Activated T-helper 1 cell treated with anti-CD3 and anti-CD28 coated beads, Interleukin-12 subunit alpha, Interleukin-12 subunit beta, Interleukin-2, Interleukin-4 antibody, amounts not matched to agents 30 ng/mL and 10 ng/mL and 1 ng/mL, durations not matched to agents 14 hours and 24 hours and 36 hours (primary cell): ENCODE measurements at regions of chr4 and their contacts with region 1.

Region 1: DNA sequence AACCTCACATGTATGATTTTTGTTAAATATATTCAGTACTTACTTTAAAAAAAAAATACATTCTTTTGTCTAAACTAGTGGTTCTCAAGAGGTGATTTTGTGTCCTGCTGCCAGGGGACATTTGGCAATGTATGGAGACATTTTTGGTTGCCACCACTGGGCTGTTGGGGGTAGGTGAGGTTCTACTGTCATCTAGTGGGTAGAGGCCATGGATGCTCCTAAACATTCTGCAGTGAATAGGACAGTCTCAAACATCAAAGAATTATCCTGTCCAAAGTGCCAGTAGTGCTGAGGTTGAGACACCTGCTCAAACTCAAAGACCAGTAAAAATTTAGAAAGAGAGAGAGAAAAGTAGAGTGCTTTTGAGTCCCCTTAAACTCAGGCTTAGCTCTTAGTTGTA is 32.9 kb upstream of the PGM2 start:
- DNase-seq: no peak
- H3K4me3 Mint-ChIP-seq: no peak overlapping the region
- H3K27ac Mint-ChIP-seq: no peak overlapping the region
- H3K4me1 Mint-ChIP-seq: no peaks in the 10 kb centered on the region
- H3K27me3 Mint-ChIP-seq: peaks cover 16% of the 10 kb centered on the region

Region 2: GRCh38 chr4:37452952-37453280 is 340.6 kb before region 1 on chr4:
- intact Hi-C with region 1: loop called (anchors 1 kb)
- DNase-seq: peak; percentile 19
- H3K4me3 Mint-ChIP-seq: peak overlapping the region; percentile 72
- H3K27ac Mint-ChIP-seq: no peak overlapping the region
- H3K4me1 Mint-ChIP-seq: peaks cover 15% of the 10 kb centered on the region
- H3K27me3 Mint-ChIP-seq: peaks cover 50% of the 10 kb centered on the region

Region 3: GRCh38 chr4:37603070-37603468 is 190.5 kb before region 1 on chr4:
- intact Hi-C with region 1: loop called (anchors 2 kb)
- DNase-seq: peak; percentile 59
- H3K4me3 Mint-ChIP-seq: no peak overlapping the region
- H3K27ac Mint-ChIP-seq: no peak overlapping the region
- H3K4me1 Mint-ChIP-seq: peaks cover 33% of the 10 kb centered on the region
- H3K27me3 Mint-ChIP-seq: no peaks in the 10 kb centered on the region

Region 4: GRCh38 chr4:37648096-37648817 is 145.3 kb before region 1 on chr4:
- intact Hi-C with region 1: no loop called
- DNase-seq: no peak
- H3K4me3 Mint-ChIP-seq: no peak overlapping the region
- H3K27ac Mint-ChIP-seq: no peak overlapping the region
- H3K4me1 Mint-ChIP-seq: peaks cover 42% of the 10 kb centered on the region
- H3K27me3 Mint-ChIP-seq: no peaks in the 10 kb centered on the region